ENCODE measurements at regions of chr1 and their contacts with region 1.

Region 1: GRCh38 chr1:33055210-33056008 is 18.7 kb upstream of the AK2 start:
- DNase-seq: peak; percentile 90
- ATAC-seq: peak; percentile 94
- H3K4me3 ChIP-seq: no peak overlapping the region
- H3K27ac ChIP-seq: no peak overlapping the region
- H3K4me1 ChIP-seq: peaks cover 5 to 16% of the 10 kb centered on the region in 2 experiments; a peak in 3 of 4 replicates
- H3K27me3 ChIP-seq: no peaks in the 10 kb centered on the region
- CTCF ChIP-seq: peak; percentile 66 to 89 (median 74)
- POLR2A ChIP-seq: no peak
- RAD21 ChIP-seq: peak; percentile 85

Region 2: DNA sequence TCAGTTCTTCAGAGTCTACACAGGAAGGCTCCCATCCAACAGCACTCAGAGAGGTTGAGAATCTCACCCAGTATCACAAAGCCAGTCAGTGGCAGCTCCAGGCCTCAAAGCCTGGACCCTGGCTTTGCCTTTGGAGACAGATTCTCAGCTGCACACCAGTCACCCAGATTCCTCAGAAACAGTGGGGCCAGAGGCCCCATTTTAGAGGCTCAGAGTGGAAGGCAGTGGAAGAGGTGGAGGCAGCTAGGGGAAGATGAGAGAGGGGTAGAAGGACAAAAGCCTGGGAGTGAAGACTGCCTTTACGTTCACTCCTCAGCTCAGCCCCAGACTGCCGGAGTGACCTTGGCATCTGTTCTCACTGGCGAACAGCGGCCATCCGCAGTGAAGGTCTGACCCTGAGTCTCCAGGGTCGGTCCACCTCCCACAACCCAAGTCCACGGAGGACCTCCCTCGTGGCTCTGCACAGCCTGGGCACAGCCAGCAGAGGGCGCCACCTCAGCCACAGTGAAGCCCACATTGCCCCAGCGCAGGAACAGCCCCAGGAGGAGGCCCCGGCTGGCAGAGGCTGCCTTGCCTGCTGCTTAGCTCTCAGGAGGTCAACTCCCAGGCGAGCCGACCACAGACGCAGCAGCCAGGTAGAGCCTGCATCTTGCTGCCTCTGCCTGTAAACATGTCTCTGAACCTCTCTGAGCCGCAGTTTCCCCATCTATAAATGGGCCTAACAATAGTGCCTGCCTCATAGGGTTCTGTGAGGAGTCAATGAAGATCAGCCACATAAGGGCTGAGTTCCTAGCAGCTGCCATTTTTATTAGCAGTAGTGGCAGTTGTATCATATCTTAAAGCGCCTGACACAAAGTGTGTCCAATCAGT is 178.8 kb before region 1 on chr1:
- CTCF ChIA-PET with region 1: interaction called, 9 read pairs
- POLR2A ChIA-PET with region 1: no interaction called
- RAD21 ChIA-PET with region 1: no interaction called
- intact Hi-C with region 1: loop called (anchors 1 kb)
- DNase-seq: peak; percentile 28
- ATAC-seq: peak; percentile 90
- H3K4me3 ChIP-seq: no peak overlapping the region
- H3K27ac ChIP-seq: no peak overlapping the region
- H3K4me1 ChIP-seq: peaks cover 2 to 16% of the 10 kb centered on the region in 2 experiments; a peak in 3 of 4 replicates
- H3K27me3 ChIP-seq: no peaks in the 10 kb centered on the region
- CTCF ChIP-seq: peak; percentile 86 to 98 (median 97)
- POLR2A ChIP-seq: no peak
- RAD21 ChIP-seq: peak; percentile 82

Region 3: GRCh38 chr1:32900951-32901822 is 154.2 kb before region 1 on chr1 and contains the start of gene TMEM54:
- CTCF ChIA-PET with region 1: no interaction called
- POLR2A ChIA-PET with region 1: no interaction called
- RAD21 ChIA-PET with region 1: no interaction called
- intact Hi-C with region 1: loop called (anchors 10 kb)
- DNase-seq: no peak
- ATAC-seq: peak; percentile 83
- H3K4me3 ChIP-seq: peak within 1 kb of the TSS; percentile 68 to 83
- H3K27ac ChIP-seq: peak within 1 kb of the TSS; percentile 71
- H3K4me1 ChIP-seq: peaks cover 19 to 32% of the 10 kb centered on the region in 2 experiments; a peak in 3 of 4 replicates
- H3K27me3 ChIP-seq: no peaks in the 10 kb centered on the region
- CTCF ChIP-seq: no peak
- POLR2A ChIP-seq: peak; percentile 18
- RAD21 ChIP-seq: no peak
- total RNA-seq, gene TMEM54: 121 TPM

Region 4: DNA sequence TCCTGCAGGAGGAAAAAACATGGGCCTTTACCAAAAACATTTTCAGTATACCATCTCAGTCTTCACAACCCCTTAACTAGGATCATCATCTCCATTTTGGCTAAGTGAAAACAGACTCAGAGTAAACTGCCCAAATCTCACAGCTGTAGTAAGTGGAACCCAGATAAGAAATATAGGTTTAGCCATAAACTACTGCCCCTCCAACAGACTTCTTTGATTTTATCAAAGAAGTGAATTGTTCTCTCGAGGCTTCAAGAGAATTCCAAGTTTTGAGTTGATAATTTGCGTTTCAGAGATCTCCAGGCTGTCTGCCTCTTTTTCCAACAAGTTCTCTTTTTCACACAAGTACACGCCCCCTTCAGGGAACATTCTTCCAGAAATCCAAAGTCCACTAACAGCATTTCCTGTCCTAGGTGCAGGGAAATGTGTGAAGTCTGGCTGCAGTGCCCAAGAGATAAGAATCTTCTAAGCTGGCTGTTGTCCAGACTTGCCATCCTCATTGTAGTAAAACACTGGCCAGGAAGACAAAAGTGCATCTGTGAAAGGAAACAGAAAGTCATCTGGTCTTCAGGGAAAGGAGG is 121.6 kb before region 1 on chr1:
- CTCF ChIA-PET with region 1: interaction called, 37 read pairs
- POLR2A ChIA-PET with region 1: no interaction called
- RAD21 ChIA-PET with region 1: interaction called in 1 of 2 experiments, 4 read pairs
- intact Hi-C with region 1: loop called (anchors 1 kb)
- DNase-seq: no peak
- ATAC-seq: peak; percentile 46
- H3K4me3 ChIP-seq: no peak overlapping the region
- H3K27ac ChIP-seq: peak overlapping the region; percentile 16
- H3K4me1 ChIP-seq: peaks cover 12 to 19% of the 10 kb centered on the region in 2 experiments; a peak in 3 of 4 replicates
- H3K27me3 ChIP-seq: no peaks in the 10 kb centered on the region
- CTCF ChIP-seq: no peak
- POLR2A ChIP-seq: no peak
- RAD21 ChIP-seq: no peak

Region 5: DNA sequence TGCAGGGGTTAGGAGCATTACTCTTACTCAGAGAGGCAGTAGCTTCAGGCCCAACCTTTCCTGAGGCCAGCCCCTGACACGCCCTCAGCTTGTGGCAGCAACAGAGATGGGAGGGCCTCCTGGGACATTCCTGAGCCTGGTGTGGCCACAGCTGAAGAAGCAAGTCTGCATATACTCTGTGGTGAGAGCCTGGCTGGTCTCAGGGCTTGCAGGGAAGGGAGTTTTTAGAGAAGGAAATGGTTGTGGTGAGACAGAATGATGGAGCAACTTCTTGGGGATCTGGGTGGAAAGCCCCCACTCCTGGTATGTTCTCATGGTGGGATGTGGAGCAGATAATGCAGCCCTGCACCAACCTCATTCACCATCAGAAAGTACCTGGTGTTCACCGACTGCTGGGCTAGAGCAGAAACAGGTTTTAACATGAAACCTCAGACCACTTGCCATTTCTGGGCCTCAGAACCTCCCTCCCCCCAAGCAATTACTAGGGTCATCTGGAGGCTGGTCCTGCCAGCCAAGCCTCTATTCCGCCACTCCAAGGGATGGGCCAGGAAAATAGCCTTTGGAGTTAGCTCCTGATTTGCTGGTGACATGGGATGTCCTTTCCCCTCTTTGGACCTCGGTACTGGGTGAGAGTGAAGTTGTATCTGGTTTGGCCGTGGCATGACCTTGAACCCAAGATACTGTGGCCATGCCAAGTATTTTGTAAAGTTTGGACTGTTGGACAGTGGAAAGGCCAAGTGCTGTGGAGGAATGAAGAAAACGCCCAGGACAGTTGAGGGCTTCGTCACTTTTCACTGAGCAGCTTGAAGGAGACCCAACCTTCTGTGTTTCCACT is 62.7 kb before region 1 on chr1:
- CTCF ChIA-PET with region 1: no interaction called
- POLR2A ChIA-PET with region 1: interaction called, 5 read pairs
- RAD21 ChIA-PET with region 1: no interaction called
- intact Hi-C with region 1: loop called (anchors 1 kb)
- DNase-seq: peak; percentile 71
- ATAC-seq: peak; percentile 92
- H3K4me3 ChIP-seq: peak overlapping the region in 1 of 2 experiments; percentile 18; a peak in 2 of 4 replicates
- H3K27ac ChIP-seq: peak overlapping the region; percentile 47
- H3K4me1 ChIP-seq: peaks cover 51 to 61% of the 10 kb centered on the region in 2 experiments
- H3K27me3 ChIP-seq: no peaks in the 10 kb centered on the region
- CTCF ChIP-seq: no peak
- POLR2A ChIP-seq: no peak
- RAD21 ChIP-seq: no peak

Region 6: GRCh38 chr1:33036526-33037503 is 18.6 kb before region 1 on chr1 and contains the start of gene AK2:
- CTCF ChIA-PET with region 1: no interaction called
- POLR2A ChIA-PET with region 1: interaction called, 3 read pairs
- RAD21 ChIA-PET with region 1: no interaction called
- intact Hi-C with region 1: loop called (anchors 2 kb)
- DNase-seq: peak; percentile 98
- ATAC-seq: peak; percentile 99
- H3K4me3 ChIP-seq: peak within 1 kb of the TSS; percentile 83 to 98
- H3K27ac ChIP-seq: peak within 1 kb of the TSS; percentile 70
- H3K4me1 ChIP-seq: peaks cover 10 to 13% of the 10 kb centered on the region in 2 experiments; a peak in 3 of 4 replicates
- H3K27me3 ChIP-seq: no peaks in the 10 kb centered on the region
- CTCF ChIP-seq: no peak
- POLR2A ChIP-seq: no peak
- RAD21 ChIP-seq: no peak
- total RNA-seq, gene AK2: 233 TPM

Region 7: GRCh38 chr1:34740161-34740868 is 1684.9 kb after region 1 on chr1:
- CTCF ChIA-PET with region 1: no interaction called
- POLR2A ChIA-PET with region 1: no interaction called
- RAD21 ChIA-PET with region 1: no interaction called
- intact Hi-C with region 1: no loop called
- DNase-seq: no peak
- ATAC-seq: no peak
- H3K4me3 ChIP-seq: no peak overlapping the region
- H3K27ac ChIP-seq: no peak overlapping the region
- H3K4me1 ChIP-seq: peaks cover 3 to 22% of the 10 kb centered on the region in 2 experiments; a peak in 3 of 4 replicates
- H3K27me3 ChIP-seq: no peaks in the 10 kb centered on the region
- CTCF ChIP-seq: no peak
- POLR2A ChIP-seq: no peak
- RAD21 ChIP-seq: no peak